Cardiac septum (tissue), 1 donor: ENCODE measurements at regions of chr13 and their contacts with region 1.

Region 1: GRCh38 chr13:94549232-94550061 is 46.5 kb downstream of the TGDS start:
- DNase-seq: peak; percentile 92

Region 2: GRCh38 chr13:94494021-94494420 is 55.4 kb before region 1 on chr13:
- intact Hi-C with region 1: no loop called
- DNase-seq: no peak

Region 3: GRCh38 chr13:94601446-94602431 is 52.3 kb after region 1 on chr13 and contains the start of gene GPR180:
- intact Hi-C with region 1: loop called (anchors 2 kb)
- DNase-seq: peak; percentile 95
- total RNA-seq, gene GPR180: 1.8 TPM